ENCODE measurements at regions of chr17 and their contacts with region 1.

Region 1: DNA sequence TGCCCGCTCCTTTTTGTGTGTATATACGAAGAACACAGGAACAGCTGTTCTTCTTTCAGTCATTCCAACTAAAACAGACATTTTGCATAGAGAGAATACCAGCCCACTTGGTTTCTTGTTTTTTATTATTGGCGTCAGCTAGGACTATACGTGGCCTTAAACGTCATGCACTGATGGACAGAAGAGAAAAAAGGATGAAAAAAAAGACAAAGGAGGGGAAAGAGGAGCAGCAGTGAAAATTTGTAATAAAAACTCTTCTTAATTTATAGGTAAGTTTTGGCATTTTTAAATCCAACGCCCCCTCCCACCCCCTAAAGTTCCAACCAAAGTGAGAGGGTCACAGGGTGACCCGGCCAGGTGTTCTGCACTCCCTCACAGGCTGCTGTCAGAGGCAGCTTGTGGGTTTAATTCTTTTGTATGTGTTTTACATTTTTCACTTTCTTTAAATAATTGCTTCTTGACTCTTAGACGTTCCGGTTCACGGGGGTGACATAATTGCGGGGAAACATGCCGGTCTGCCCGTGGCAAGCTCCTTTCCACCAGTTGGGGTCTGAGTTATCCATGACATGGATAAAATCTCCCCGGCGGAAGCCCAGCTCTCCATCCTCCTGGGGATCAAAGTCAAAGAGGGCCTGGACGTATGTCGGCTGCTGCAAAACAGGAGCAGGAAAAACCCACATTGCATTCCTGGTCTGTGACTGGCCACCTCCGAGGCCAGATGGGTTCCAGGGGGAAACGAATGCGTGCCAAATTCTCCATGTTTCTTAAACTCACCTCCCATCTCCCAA is 30.9 kb upstream of the SLC25A19 start:
- DNase-seq: no peak
- ATAC-seq: no peak
- H3K4me3 Mint-ChIP-seq: no peak overlapping the region
- H3K27ac Mint-ChIP-seq: peak overlapping the region; percentile 36
- H3K4me1 Mint-ChIP-seq: peaks cover 18% of the 10 kb centered on the region
- H3K27me3 Mint-ChIP-seq: no peaks in the 10 kb centered on the region
- CTCF ChIP-seq: no peak

Region 2: DNA sequence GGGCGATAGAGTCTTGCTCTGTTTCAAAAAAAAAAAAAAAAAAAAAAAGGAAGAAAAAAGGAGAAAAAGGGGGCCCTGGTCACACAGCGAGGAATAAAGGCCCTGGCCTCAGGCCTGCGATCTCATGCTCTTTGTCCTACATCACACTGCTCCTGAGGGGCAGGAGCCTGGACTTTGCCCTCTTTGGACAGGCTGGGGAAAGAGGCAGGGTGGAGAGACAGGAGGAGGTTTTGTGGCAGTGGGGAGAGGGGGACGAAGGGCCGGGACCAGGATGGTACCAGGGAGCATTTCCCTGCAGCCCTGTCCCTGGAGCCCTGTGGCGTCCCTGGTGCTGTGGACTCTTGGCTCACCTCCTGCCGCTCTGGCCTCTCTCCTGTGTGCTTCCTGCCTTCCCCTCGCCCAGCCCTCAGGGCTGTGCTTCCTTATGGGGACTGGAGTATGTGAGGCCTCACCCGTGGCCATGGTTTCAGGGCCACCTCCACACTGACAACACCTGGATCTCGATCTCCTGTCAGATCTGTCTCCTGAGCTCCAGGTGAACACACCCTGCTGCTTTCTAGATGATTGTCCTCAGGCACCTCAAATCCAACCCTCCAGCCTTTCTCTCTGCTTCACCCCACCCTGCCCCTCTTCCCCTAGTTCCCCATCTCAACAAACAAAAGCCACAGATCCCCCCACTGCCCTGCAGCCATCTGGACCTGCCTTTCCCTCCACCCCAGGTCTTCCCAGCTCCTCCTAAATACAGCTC is 10.9 kb before region 1 on chr17:
- CTCF ChIA-PET with region 1: interaction called, 10 read pairs
- POLR2A ChIA-PET with region 1: interaction called, 4 read pairs
- intact Hi-C with region 1: no loop called
- DNase-seq: no peak
- ATAC-seq: no peak
- H3K4me3 Mint-ChIP-seq: no peak overlapping the region
- H3K27ac Mint-ChIP-seq: no peak overlapping the region
- H3K4me1 Mint-ChIP-seq: peaks cover 9% of the 10 kb centered on the region
- H3K27me3 Mint-ChIP-seq: no peaks in the 10 kb centered on the region
- CTCF ChIP-seq: no peak

Region 3: DNA sequence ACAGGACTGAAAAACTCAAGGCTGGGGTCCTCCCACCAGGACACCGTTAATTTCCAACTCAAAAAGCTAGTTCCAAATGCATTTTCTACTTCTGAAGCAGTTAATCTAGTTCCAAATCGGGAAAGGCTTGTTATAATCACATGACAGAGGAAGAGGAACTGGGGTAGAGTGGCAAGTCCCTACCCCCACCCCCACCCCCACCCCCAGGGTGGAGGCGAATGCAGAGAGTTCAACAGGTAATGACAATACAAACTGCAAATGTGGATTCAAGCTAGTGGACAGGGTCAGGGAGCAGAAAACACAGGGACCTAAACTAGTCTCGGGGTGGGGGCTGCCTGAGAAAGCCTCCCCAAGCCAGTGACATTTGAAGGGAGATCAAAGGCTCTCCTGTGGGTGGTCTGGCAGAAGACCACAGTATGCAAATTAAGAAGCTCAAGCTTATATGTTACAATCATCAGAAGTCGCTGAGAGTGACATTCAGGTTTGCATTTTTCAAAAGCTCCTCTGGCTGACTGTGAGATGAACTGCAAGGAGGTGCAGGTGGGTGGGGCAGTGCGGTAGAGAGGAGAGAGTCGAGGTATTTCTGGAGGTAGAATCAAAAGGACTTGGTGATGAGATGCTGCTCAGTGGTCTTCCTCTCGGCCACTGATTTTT is 25.5 kb after region 1 on chr17:
- CTCF ChIA-PET with region 1: interaction called, 38 read pairs
- POLR2A ChIA-PET with region 1: interaction called, 3 read pairs
- intact Hi-C with region 1: no loop called
- DNase-seq: peak; percentile 84
- ATAC-seq: peak; percentile 78
- H3K4me3 Mint-ChIP-seq: peak overlapping the region; percentile 69
- H3K27ac Mint-ChIP-seq: peak overlapping the region; percentile 87
- H3K4me1 Mint-ChIP-seq: peaks cover 88% of the 10 kb centered on the region
- H3K27me3 Mint-ChIP-seq: no peaks in the 10 kb centered on the region
- CTCF ChIP-seq: no peak

Region 4: DNA sequence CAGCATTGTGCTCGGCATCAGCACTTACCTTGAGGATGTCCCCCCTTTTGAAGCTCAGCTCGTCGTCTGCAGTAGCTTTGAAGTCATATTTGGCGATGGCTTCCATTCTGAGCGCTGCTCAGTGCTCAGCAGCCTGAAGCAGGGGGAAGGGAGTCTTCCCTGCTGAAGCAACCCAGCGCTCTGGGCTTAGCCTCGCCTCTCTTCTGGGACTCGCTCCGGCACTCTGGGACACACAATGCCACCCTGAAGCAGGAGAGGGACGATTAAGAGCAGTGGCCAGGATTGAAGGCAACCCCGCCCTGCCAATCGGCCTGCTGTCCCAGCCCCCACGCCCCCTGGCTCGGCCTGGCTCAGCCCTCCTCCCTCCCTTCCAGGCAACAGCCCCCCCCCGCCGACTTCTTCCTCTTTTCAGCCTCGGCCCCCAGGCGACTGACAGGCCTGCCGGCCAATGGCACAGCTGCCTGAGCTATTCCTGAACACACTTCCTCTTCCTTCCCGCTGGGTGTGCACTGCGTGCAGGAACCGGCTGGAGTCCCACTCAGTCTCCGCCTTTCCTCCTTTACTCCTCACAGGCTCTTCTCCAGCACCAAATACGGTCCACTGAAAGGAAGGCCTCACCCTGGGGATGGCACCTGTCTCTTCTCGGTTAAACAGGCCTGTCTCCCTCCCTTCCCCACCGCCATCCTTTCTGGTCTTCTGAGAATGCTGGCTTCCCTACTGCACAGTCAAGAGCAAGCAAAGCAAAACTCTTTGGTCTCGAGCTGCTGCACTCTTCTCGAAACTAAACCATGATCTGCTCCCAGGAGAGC is 73.6 kb after region 1 on chr17:
- CTCF ChIA-PET with region 1: interaction called, 29 read pairs
- POLR2A ChIA-PET with region 1: interaction called, 10 read pairs
- intact Hi-C with region 1: no loop called
- DNase-seq: peak; percentile 90
- ATAC-seq: peak; percentile 90
- H3K4me3 Mint-ChIP-seq: peak overlapping the region; percentile 96
- H3K27ac Mint-ChIP-seq: peak overlapping the region; percentile 78
- H3K4me1 Mint-ChIP-seq: peaks cover 72% of the 10 kb centered on the region
- H3K27me3 Mint-ChIP-seq: no peaks in the 10 kb centered on the region
- CTCF ChIP-seq: no peak

Region 5: GRCh38 chr17:75405365-75406221 is 85.5 kb after region 1 on chr17 and contains the start of gene GRB2:
- CTCF ChIA-PET with region 1: interaction called, 34 read pairs
- POLR2A ChIA-PET with region 1: interaction called, 5 read pairs
- intact Hi-C with region 1: loop called (anchors 2 kb)
- DNase-seq: peak; percentile 99
- ATAC-seq: peak; percentile 88
- H3K4me3 Mint-ChIP-seq: peak within 1 kb of the TSS; percentile 99
- H3K27ac Mint-ChIP-seq: peak within 1 kb of the TSS; percentile 99
- H3K4me1 Mint-ChIP-seq: peaks cover 34% of the 10 kb centered on the region
- H3K27me3 Mint-ChIP-seq: no peaks in the 10 kb centered on the region
- CTCF ChIP-seq: no peak
- total RNA-seq, gene GRB2: 167 to 179 TPM

Measured in activated CD8-positive, alpha-beta T cell treated with anti-CD3 and anti-CD28 coated beads for 36 hours (primary cell).